ENCODE measurements at regions of chr2 and their contacts with region 1.

Region 1: GRCh38 chr2:12884713-12885282 is 168.1 kb downstream of the TRIB2 start:
- DNase-seq: peak; percentile 40 to 79 (median 58)
- ATAC-seq: peak; percentile 51 to 90 (median 90)
- H3K4me3 ChIP-seq: no peak overlapping the region
- H3K27ac ChIP-seq: peak overlapping the region in 11 of 12 donors; percentile 22 to 72 (median 56)
- H3K4me1 ChIP-seq: peaks cover 13 to 26% (median 22%) of the 10 kb centered on the region in 12 donors
- H3K27me3 ChIP-seq: no peaks in the 10 kb centered on the region
- CTCF ChIP-seq: no peak
- POLR2A ChIP-seq: no peak

Region 2: GRCh38 chr2:12835733-12836132 is 49.1 kb before region 1 on chr2:
- intact Hi-C with region 1: loop called in 1 of 10 experiments (anchors 5 kb)
- DNase-seq: peak in 1 of 5 donors; percentile 39
- ATAC-seq: peak; percentile 64 to 85 (median 76)
- H3K4me3 ChIP-seq: no peak overlapping the region
- H3K27ac ChIP-seq: peak overlapping the region in 7 of 12 donors; percentile 24 to 65 (median 49)
- H3K4me1 ChIP-seq: peaks cover 0 to 24% (median 8%) of the 10 kb centered on the region in 12 donors
- H3K27me3 ChIP-seq: no peaks in the 10 kb centered on the region
- CTCF ChIP-seq: no peak
- POLR2A ChIP-seq: no peak